Astrocyte of the cerebellum (primary cell): ENCODE measurements at regions of chr7 and their contacts with region 1.

Region 1: GRCh38 chr7:91953618-91954017 is 13.0 kb downstream of the AKAP9 start:
- DNase-seq: no peak
- H3K4me3 ChIP-seq: no peak overlapping the region
- CTCF ChIP-seq: peak; percentile 27

Region 2: GRCh38 chr7:91995391-91996105 is 41.9 kb after region 1 on chr7:
- in situ Hi-C with region 1: loop called (anchors 5 kb)
- DNase-seq: no peak
- H3K4me3 ChIP-seq: no peak overlapping the region
- CTCF ChIP-seq: no peak